AG04450 (cell line): ENCODE measurements at regions of chr3 and their contacts with region 1.

Region 1: DNA sequence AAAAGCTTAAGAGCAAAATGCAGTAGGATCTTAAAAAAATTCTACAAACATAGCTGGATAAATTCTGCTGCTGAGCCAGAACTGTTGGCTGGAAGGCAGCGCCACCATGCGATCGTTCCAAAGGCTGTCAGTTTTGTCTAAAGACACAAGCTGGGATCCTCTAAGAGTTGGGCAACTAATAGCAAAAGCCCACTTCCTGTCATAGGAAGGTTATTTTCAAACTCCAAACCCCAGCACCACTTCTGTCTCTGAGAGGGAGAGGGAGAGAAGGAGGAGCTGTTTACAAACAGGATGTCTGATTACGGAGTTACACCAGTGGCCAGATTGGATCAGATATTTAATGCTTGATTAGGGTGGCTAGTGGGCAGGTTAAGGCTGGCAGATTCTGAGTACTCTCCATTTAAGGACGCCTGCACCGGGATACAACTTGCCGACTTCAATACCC is 44.0 kb downstream of the EIF4E3 start:
- DNase-seq: peak; percentile 47
- H3K4me3 ChIP-seq: no peak overlapping the region
- H3K27ac ChIP-seq: no peak overlapping the region
- H3K27me3 ChIP-seq: no peaks in the 10 kb centered on the region
- CTCF ChIP-seq: peak; percentile 91

Region 2: DNA sequence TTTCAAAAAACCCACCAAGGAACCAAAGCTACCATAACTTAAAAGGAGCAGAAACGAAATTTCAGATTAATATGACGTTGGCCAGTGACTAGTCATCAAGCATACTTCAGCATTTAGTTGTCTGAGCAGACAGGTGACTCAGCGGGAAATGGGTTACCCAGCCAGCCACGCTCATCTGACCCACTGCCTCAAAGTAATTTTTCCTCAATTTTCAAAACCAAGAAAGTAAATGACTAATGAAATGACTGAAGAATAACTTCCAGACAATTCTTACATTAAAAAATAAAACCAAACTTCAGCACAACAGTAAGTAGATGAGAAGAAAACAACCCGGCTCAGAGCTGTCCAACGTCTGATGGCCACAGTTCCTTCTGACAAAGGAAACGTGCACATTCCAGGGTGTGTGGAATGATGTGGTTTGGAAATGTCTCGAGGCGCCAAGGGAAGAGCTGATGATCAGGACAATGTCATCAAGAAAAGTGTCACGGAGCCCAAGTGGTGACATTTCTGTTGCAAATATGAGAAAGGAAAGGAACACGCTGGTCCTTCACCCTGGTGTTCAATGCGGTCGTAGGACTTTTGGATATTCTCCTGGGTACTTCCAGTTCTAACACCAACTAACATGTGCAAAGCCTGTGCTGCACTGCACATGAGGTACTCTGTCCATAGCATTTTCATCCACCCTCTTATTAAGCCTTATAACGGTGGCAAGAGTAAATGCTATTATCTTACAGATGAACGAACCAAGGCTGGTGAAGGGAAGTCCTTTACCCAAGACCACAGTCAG is 176.8 kb before region 1 on chr3:
- CTCF ChIA-PET with region 1: no interaction called
- POLR2A ChIA-PET with region 1: no interaction called
- DNase-seq: peak; percentile 64
- H3K4me3 ChIP-seq: peak overlapping the region; percentile 23; the same call in 1 of the 2 replicates
- H3K27ac ChIP-seq: peak overlapping the region; percentile 79
- H3K27me3 ChIP-seq: no peaks in the 10 kb centered on the region
- CTCF ChIP-seq: no peak

Region 3: DNA sequence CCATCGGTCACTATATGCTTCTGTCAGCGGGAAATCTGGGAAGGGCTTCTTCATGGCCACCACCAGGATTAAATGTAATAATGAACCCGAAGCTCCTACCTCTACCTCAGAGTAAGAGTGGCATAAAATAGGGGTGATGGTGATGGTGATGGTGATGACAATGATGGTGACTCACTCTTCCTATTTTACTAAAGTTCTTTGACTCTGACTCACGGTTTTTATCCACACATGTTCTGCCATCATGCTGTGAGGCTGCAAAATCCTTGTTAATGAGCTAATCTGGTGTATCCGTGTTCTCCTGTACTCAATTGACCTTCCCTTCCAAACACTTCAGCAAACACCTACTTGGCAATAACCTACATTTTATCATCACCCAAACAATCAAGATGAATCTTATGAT is 79.4 kb before region 1 on chr3:
- CTCF ChIA-PET with region 1: interaction called, 18 read pairs
- POLR2A ChIA-PET with region 1: no interaction called
- DNase-seq: no peak
- H3K4me3 ChIP-seq: no peak overlapping the region
- H3K27ac ChIP-seq: no peak overlapping the region
- H3K27me3 ChIP-seq: no peaks in the 10 kb centered on the region
- CTCF ChIP-seq: no peak